ENCODE measurements at regions of chr1 and their contacts with region 1.

Region 1: GRCh38 chr1:185281245-185281644 is 35.8 kb downstream of the IVNS1ABP start:
- DNase-seq: peak; percentile 62 to 80 (median 76)
- H3K4me3 ChIP-seq: no peak overlapping the region
- H3K4me3 Mint-ChIP-seq: peak overlapping the region; percentile 33 to 89 (median 78)
- H3K27ac ChIP-seq: peak overlapping the region; percentile 31
- H3K27ac Mint-ChIP-seq: peak overlapping the region; percentile 86 to 97 (median 95)
- H3K4me1 ChIP-seq: peaks cover 65% of the 10 kb centered on the region
- H3K4me1 Mint-ChIP-seq: peaks cover 46 to 76% (median 64%) of the 10 kb centered on the region in 4 donors
- H3K27me3 ChIP-seq: no peaks in the 10 kb centered on the region
- H3K27me3 Mint-ChIP-seq: no peaks in the 10 kb centered on the region

Region 2: GRCh38 chr1:183291802-183292514 is 1989.3 kb before region 1 on chr1:
- CTCF ChIA-PET with region 1: no interaction called
- POLR2A ChIA-PET with region 1: no interaction called
- intact Hi-C with region 1: no loop called
- DNase-seq: no peak
- H3K4me3 ChIP-seq: no peak overlapping the region
- H3K4me3 Mint-ChIP-seq: no peak overlapping the region
- H3K27ac ChIP-seq: no peak overlapping the region
- H3K27ac Mint-ChIP-seq: no peak overlapping the region
- H3K4me1 ChIP-seq: no peaks in the 10 kb centered on the region
- H3K4me1 Mint-ChIP-seq: no peaks in the 10 kb centered on the region
- H3K27me3 ChIP-seq: no peaks in the 10 kb centered on the region
- H3K27me3 Mint-ChIP-seq: peaks cover 4 to 7% of the 10 kb centered on the region in 2 donors

Region 3: GRCh38 chr1:185257947-185258203 is 23.4 kb before region 1 on chr1:
- CTCF ChIA-PET with region 1: interaction called, 4 read pairs
- POLR2A ChIA-PET with region 1: interaction called, 15 read pairs
- intact Hi-C with region 1: no loop called
- DNase-seq: no peak
- H3K4me3 ChIP-seq: no peak overlapping the region
- H3K4me3 Mint-ChIP-seq: peak overlapping the region in 7 of 8 donors; percentile 35 to 77 (median 59)
- H3K27ac ChIP-seq: no peak overlapping the region
- H3K27ac Mint-ChIP-seq: peak overlapping the region in 3 of 7 donors; percentile 23 to 68 (median 32)
- H3K4me1 ChIP-seq: peaks cover 14% of the 10 kb centered on the region
- H3K4me1 Mint-ChIP-seq: peaks cover 5 to 25% (median 15%) of the 10 kb centered on the region in 4 donors
- H3K27me3 ChIP-seq: no peaks in the 10 kb centered on the region
- H3K27me3 Mint-ChIP-seq: no peaks in the 10 kb centered on the region

Region 4: GRCh38 chr1:185297982-185298381 is 16.7 kb after region 1 on chr1:
- CTCF ChIA-PET with region 1: interaction called, 22 read pairs
- POLR2A ChIA-PET with region 1: interaction called, 47 read pairs
- intact Hi-C with region 1: loop called (anchors 1 kb)
- DNase-seq: no peak
- H3K4me3 ChIP-seq: no peak overlapping the region
- H3K4me3 Mint-ChIP-seq: no peak overlapping the region
- H3K27ac ChIP-seq: no peak overlapping the region
- H3K27ac Mint-ChIP-seq: peak overlapping the region in 4 of 7 donors; percentile 4 to 74 (median 26)
- H3K4me1 ChIP-seq: no peaks in the 10 kb centered on the region
- H3K4me1 Mint-ChIP-seq: peaks cover 7 to 18% (median 10%) of the 10 kb centered on the region in 4 donors
- H3K27me3 ChIP-seq: no peaks in the 10 kb centered on the region
- H3K27me3 Mint-ChIP-seq: no peaks in the 10 kb centered on the region

Region 5: DNA sequence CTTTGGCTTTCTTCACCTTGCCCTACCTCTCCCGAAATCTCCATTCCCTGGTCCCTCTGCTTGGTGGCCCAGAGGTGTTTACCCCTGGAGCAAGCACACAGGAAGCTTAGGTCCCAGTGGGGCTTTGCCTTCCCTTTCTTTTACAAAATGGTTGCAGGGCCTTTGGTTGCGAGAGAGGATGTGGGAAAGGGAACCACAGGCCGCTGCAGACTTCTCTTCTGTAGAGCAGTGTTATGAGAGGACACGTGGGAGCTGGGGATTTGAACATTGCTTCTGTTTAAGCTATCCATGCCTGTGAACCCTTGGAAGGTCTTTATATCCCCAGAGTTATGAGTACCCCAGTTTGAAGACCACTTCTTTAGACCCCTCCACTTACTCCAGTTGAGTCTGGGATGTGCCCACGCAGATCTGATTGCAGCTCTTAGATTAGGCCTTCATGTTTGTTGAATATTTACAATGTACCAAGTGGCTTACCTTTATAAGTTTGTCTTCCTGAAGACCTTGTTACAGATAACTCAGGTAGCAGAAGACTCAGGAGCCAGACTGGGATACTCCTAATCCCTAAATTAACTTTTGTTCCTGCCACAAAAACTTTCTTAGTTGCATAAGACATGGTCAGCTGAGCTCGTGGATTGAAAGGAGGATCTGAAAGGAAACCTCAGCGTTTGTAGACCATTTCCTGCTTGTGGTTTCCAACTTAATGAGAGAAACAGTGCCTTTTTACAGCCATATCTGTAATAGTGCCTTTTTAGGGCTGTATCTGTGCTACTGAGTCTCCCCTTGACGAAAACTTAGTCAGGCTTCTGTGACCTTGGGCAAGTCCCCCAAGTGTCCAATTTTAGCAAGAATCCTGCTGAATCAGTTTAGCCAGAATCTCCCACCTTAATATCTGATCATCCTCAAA is 57.7 kb after region 1 on chr1:
- CTCF ChIA-PET with region 1: no interaction called
- POLR2A ChIA-PET with region 1: interaction called, 13 read pairs
- intact Hi-C with region 1: no loop called
- DNase-seq: peak; percentile 50 to 62 (median 54)
- H3K4me3 ChIP-seq: peak overlapping the region in 1 of 2 donors; percentile 10
- H3K4me3 Mint-ChIP-seq: peak overlapping the region in 7 of 8 donors; percentile 21 to 88 (median 64)
- H3K27ac ChIP-seq: peak overlapping the region; percentile 25
- H3K27ac Mint-ChIP-seq: peak overlapping the region; percentile 62 to 91 (median 85)
- H3K4me1 ChIP-seq: peaks cover 37% of the 10 kb centered on the region
- H3K4me1 Mint-ChIP-seq: peaks cover 25 to 40% (median 32%) of the 10 kb centered on the region in 4 donors
- H3K27me3 ChIP-seq: no peaks in the 10 kb centered on the region
- H3K27me3 Mint-ChIP-seq: no peaks in the 10 kb centered on the region

Region 6: DNA sequence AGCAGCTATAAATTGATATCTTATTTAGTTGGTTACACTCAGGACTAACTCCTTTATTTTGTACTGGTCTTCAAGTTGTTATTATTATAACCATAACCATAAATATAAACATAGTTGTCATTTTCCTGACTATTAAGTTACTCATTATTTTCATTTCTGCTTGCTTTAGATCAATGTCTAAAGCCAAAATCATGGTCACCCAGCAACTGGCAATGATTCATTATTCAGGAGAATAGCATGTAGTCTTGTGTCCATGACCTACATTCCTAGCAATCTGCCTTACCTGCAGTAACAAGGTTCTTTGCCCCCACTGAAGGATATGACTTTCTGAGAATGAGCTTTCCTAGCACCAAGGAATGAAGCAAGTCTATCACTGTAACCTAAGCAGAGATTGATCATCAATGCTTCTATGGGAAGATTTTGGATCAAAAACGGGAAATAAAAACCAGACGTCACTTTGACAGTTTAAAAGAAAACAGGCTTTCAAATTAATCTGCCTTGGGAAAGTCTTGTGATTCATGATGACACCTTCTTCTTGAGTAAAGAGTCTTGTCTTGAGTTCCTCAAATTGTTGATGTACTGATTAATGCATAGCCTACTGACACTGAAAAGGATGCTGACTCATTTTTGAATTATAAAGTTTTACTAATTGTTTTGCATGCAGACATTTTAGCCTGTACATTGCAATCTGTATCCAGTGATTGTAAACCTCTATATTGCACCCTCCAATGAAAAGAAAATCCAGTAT is 239.1 kb after region 1 on chr1:
- CTCF ChIA-PET with region 1: no interaction called
- POLR2A ChIA-PET with region 1: no interaction called
- intact Hi-C with region 1: no loop called
- DNase-seq: no peak
- H3K4me3 ChIP-seq: no peak overlapping the region
- H3K4me3 Mint-ChIP-seq: no peak overlapping the region
- H3K27ac ChIP-seq: no peak overlapping the region
- H3K27ac Mint-ChIP-seq: no peak overlapping the region
- H3K4me1 ChIP-seq: no peaks in the 10 kb centered on the region
- H3K4me1 Mint-ChIP-seq: peaks cover 0 to 1% (median 0%) of the 10 kb centered on the region in 4 donors
- H3K27me3 ChIP-seq: no peaks in the 10 kb centered on the region
- H3K27me3 Mint-ChIP-seq: peaks cover 0 to 1% of the 10 kb centered on the region in 2 donors

Region 7: GRCh38 chr1:185670187-185670627 is 389.0 kb after region 1 on chr1:
- CTCF ChIA-PET with region 1: interaction called, 11 read pairs
- POLR2A ChIA-PET with region 1: interaction called, 4 read pairs
- intact Hi-C with region 1: no loop called
- DNase-seq: peak; percentile 44 to 59 (median 57)
- H3K4me3 ChIP-seq: no peak overlapping the region
- H3K4me3 Mint-ChIP-seq: no peak overlapping the region
- H3K27ac ChIP-seq: no peak overlapping the region
- H3K27ac Mint-ChIP-seq: peak overlapping the region in 3 of 7 donors; percentile 3 to 31 (median 21)
- H3K4me1 ChIP-seq: peaks cover 14% of the 10 kb centered on the region
- H3K4me1 Mint-ChIP-seq: peaks cover 14 to 28% (median 20%) of the 10 kb centered on the region in 4 donors
- H3K27me3 ChIP-seq: no peaks in the 10 kb centered on the region
- H3K27me3 Mint-ChIP-seq: no peaks in the 10 kb centered on the region